ENCODE measurements at regions of chr10 and their contacts with region 1.

Region 1: GRCh38 chr10:102394079-102394800 is 1.3 kb upstream of the NFKB2 start:
- DNase-seq: peak; percentile 89 to 90
- ATAC-seq: peak; percentile 84 to 87
- H3K4me3 ChIP-seq: peak overlapping the region; percentile 68 to 79 (median 75)
- H3K27ac ChIP-seq: peak overlapping the region; percentile 90 to 92 (median 92)
- H3K4me1 ChIP-seq: peaks cover 21 to 22% of the 10 kb centered on the region in 2 donors
- H3K27me3 ChIP-seq: no peaks in the 10 kb centered on the region
- CTCF ChIP-seq: peak in 4 of 5 experiments; percentile 58 to 98 (median 97)
- POLR2A ChIP-seq: peak; percentile 88 to 91

Region 2: GRCh38 chr10:102167861-102168260 is 226.4 kb before region 1 on chr10:
- in situ Hi-C with region 1: no loop called
- intact Hi-C with region 1: loop called (anchors 1 kb)
- DNase-seq: no peak
- ATAC-seq: no peak
- H3K4me3 ChIP-seq: no peak overlapping the region
- H3K27ac ChIP-seq: no peak overlapping the region
- H3K4me1 ChIP-seq: peaks cover 0 to 7% of the 10 kb centered on the region in 2 donors
- H3K27me3 ChIP-seq: no peaks in the 10 kb centered on the region
- CTCF ChIP-seq: no peak
- POLR2A ChIP-seq: no peak

Region 3: GRCh38 chr10:102420810-102421644 is 26.8 kb after region 1 on chr10 and contains the start of gene FBXL15:
- in situ Hi-C with region 1: no loop called
- intact Hi-C with region 1: loop called (anchors 1 kb)
- DNase-seq: peak; percentile 96
- ATAC-seq: peak; percentile 90 to 94
- H3K4me3 ChIP-seq: peak within 1 kb of the TSS; percentile 82 to 92 (median 87)
- H3K27ac ChIP-seq: peak within 1 kb of the TSS; percentile 85 to 97 (median 94)
- H3K4me1 ChIP-seq: peaks cover 27 to 30% of the 10 kb centered on the region in 2 donors
- H3K27me3 ChIP-seq: peaks cover 19 to 29% (median 23%) of the 10 kb centered on the region in 3 donors
- CTCF ChIP-seq: peak in 2 of 5 experiments; percentile 22 to 41
- POLR2A ChIP-seq: peak; percentile 30 to 39
- total RNA-seq, gene FBXL15: 14.2 to 34.8 (median 21.0) TPM

Region 4: DNA sequence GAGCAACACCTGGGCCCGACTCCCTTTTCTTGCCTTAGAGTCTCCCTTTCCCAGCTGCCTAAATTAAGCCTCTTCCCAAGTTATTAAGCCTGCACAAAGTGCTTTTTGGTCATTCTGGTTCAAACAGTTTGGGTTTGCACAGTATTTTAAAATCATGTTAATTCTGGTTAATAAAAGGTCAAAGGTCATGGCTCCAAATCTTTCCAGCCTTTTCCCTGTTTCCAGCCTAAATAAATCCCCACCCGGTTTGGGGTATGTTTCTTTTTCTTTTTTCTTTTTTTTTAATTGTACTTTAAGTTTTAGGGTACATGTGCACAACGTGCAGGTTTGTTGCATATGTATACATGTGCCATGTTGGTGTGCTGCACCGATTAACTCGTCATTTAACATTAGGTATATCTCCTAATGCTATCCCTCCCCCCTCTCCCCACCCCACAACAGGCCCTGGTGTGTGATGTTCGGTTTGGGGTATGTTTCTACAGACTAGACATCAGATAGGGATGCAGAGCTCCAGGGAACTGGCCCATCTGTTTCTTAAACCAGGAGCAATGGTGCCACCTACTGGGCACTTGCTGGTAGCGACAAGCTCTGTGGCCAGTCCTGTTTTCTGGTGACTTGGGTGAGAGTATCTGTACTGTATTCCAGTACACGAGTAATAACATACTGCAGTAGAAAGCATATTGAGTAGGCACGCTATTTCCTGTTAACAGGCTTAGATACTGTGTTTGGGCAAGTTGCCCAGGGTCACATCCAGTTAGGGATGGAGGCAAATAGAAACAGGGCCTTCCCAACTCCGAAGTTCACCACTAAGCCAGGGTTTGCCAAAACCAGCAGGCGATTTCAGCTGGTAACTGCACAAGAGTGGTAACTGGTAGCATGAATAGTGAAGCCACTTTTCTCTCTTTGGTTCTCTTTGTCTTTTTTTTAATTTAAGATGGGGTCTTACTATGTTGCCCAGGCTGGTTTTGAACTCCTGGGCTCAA is 189.5 kb after region 1 on chr10:
- in situ Hi-C with region 1: loop called (anchors 5 to 25 kb)
- intact Hi-C with region 1: loop called (anchors 1 kb)
- DNase-seq: peak; percentile 69 to 80
- ATAC-seq: peak; percentile 91 to 96
- H3K4me3 ChIP-seq: no peak overlapping the region
- H3K27ac ChIP-seq: no peak overlapping the region
- H3K4me1 ChIP-seq: peaks cover 3 to 22% of the 10 kb centered on the region in 2 donors
- H3K27me3 ChIP-seq: no peaks in the 10 kb centered on the region
- CTCF ChIP-seq: peak; percentile 85 to 89 (median 87)
- POLR2A ChIP-seq: no peak

Region 5: GRCh38 chr10:102713814-102714620 is 319.8 kb after region 1 on chr10 and contains the start of gene ARL3:
- in situ Hi-C with region 1: no loop called
- intact Hi-C with region 1: no loop called
- DNase-seq: peak; percentile 96 to 97
- ATAC-seq: peak; percentile 88
- H3K4me3 ChIP-seq: peak within 1 kb of the TSS; percentile 74 to 99 (median 91)
- H3K27ac ChIP-seq: peak within 1 kb of the TSS; percentile 83 to 89 (median 86)
- H3K4me1 ChIP-seq: peaks cover 26 to 28% of the 10 kb centered on the region in 2 donors
- H3K27me3 ChIP-seq: no peaks in the 10 kb centered on the region
- CTCF ChIP-seq: peak; percentile 48 to 66 (median 61)
- POLR2A ChIP-seq: peak; percentile 58 to 70
- total RNA-seq, gene ARL3: 1.0 to 2.4 (median 1.5) TPM